ENCODE measurements at regions of chr6 and their contacts with region 1.

Region 1: GRCh38 chr6:73520688-73521350 is at the start of gene EEF1A1:
- DNase-seq: peak; percentile 99
- H3K4me3 ChIP-seq: peak within 1 kb of the TSS; percentile 99
- H3K27ac ChIP-seq: peak within 1 kb of the TSS; percentile 97
- H3K4me1 ChIP-seq: peaks cover 33% of the 10 kb centered on the region
- CTCF ChIP-seq: no peak
- total RNA-seq, gene EEF1A1: 8,152 and 8,173 TPM in 2 replicates

Region 2: DNA sequence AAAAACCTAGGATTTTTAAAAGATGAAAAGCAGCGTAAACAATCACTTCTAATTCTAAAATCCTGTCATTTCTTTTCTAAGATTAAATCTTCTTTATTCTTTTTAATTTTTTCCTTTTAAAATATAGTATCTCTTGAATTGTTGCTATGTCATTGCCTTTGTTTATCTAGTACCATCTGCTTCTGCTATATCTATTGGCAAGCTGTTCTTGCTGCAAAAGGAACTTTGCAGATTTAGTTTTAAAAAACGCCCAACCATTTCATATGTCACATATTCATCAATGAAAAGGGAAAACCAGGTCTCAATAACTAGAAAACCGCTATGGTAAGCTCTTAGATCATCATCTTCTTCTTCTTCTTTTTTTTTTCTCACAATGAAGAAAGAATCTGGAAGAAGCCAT is 11.5 kb after region 1 on chr6:
- CTCF ChIA-PET with region 1: no interaction called
- POLR2A ChIA-PET with region 1: interaction called, 11 read pairs
- intact Hi-C with region 1: no loop called
- DNase-seq: no peak
- H3K4me3 ChIP-seq: no peak overlapping the region
- H3K27ac ChIP-seq: no peak overlapping the region
- H3K4me1 ChIP-seq: no peaks in the 10 kb centered on the region
- CTCF ChIP-seq: no peak

Region 3: GRCh38 chr6:73585566-73586415 is 65.0 kb after region 1 on chr6:
- CTCF ChIA-PET with region 1: interaction called, 5 read pairs
- POLR2A ChIA-PET with region 1: interaction called, 33 read pairs
- intact Hi-C with region 1: loop called (anchors 1 kb)
- DNase-seq: peak; percentile 70
- H3K4me3 ChIP-seq: peak overlapping the region; percentile 56
- H3K27ac ChIP-seq: peak overlapping the region; percentile 78
- H3K4me1 ChIP-seq: peaks cover 21% of the 10 kb centered on the region
- CTCF ChIP-seq: no peak

Region 4: DNA sequence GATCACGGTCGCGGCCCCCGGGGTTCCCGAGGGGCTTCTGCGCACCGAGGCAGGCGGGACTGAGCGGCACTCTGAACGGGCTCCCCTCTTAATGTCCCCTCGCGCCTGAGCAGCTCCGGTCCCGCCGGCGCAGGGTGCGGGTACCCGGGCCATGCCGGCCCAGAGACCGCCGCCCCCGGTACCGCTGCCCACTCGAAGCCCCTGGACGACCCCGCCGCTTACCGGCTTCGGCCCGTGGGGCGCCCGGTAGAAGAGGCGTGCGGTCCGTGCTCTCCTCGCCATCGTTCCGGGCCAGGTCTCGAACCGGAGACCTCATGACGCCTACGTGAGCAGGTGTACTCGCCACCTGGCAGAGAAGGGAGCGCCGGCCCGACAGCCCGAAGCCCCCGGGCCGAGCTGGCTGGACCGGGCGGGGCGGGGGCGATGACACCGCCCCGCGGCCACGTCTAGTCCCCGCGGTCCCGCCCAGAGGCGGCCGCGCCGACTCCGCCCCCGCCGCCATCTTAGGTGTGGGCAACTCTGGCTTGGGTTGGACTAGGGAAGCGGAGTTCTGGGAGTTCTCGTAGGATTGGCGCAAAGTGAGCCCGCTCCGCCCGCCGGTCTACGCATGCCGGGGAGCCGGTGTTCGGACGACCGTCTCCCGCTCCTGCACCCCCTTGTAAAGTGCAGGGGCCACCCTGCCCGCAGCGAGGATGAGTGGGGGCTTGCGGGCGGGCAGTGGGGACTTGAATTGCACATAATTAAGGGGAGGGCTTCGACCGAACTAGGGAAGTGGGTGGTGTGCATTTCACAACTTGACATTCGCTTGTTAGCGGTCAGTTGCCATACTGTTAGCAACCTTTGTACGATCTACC is 133.0 kb after region 1 on chr6 and contains the start of gene SLC17A5:
- CTCF ChIA-PET with region 1: no interaction called
- POLR2A ChIA-PET with region 1: interaction called, 27 read pairs
- intact Hi-C with region 1: loop called (anchors 1 kb)
- DNase-seq: peak; percentile 93
- H3K4me3 ChIP-seq: peak within 1 kb of the TSS; percentile 96
- H3K27ac ChIP-seq: peak within 1 kb of the TSS; percentile 83
- H3K4me1 ChIP-seq: peaks cover 19% of the 10 kb centered on the region
- CTCF ChIP-seq: no peak
- total RNA-seq, gene SLC17A5: 7.4 and 8.5 TPM in 2 replicates

Measured in OCI-LY7 (cell line).